ENCODE measurements at regions of chr2 and their contacts with region 1.

Region 1: DNA sequence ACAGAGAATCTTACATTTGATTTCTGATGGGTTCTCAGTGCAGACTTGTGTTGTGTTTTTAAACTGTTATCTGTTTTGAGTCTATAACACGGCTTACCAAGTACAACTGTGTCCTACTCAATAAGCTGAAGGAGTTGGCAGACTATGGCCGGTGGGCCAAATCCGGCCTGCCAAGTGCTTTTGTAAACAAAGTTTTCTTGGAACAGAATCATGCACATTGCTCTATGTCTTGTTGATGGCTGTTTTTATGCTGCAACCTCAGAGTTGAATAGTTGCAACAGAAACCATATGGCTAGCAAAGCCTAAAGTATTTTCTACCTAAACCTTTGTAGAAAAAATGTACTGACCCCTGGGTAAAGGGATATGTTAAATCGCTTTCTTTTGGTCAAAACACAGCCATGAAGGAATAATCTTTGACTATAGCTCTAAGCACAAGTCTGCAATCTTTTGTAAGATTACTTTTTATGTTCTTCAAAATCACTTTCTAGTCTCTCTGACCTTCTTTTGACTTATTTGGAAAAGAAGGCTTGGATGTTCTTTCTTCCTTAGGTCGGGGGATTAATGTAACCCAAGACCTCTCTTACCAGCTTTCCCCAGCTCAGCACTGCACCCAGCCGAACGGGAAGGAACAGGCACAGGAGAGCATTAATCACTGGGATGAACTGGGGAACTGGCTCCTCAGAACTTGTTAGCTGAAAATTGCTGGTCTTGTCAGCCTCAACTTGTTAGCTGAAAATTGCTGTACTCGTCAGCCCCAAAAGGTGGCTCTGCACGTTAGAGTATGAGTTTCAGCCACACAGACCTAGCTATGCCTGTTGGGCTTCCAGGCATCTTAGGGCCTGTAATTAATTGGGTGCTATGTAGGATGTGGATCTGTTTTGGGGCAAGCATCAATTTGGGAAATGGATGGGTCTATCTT is 75.4 kb downstream of the CD8B2 start:
- DNase-seq: no peak
- ATAC-seq: peak; percentile 75
- H3K4me3 Mint-ChIP-seq: no peak overlapping the region
- H3K27ac Mint-ChIP-seq: 0 out of 2 replicates have a peak overlapping the region, but pooled peaks have one; percentile 2
- H3K4me1 Mint-ChIP-seq: peaks cover 2% of the 10 kb centered on the region; the same call in 1 of the 2 replicates
- H3K27me3 Mint-ChIP-seq: no peaks in the 10 kb centered on the region
- CTCF ChIP-seq: no peak

Region 2: DNA sequence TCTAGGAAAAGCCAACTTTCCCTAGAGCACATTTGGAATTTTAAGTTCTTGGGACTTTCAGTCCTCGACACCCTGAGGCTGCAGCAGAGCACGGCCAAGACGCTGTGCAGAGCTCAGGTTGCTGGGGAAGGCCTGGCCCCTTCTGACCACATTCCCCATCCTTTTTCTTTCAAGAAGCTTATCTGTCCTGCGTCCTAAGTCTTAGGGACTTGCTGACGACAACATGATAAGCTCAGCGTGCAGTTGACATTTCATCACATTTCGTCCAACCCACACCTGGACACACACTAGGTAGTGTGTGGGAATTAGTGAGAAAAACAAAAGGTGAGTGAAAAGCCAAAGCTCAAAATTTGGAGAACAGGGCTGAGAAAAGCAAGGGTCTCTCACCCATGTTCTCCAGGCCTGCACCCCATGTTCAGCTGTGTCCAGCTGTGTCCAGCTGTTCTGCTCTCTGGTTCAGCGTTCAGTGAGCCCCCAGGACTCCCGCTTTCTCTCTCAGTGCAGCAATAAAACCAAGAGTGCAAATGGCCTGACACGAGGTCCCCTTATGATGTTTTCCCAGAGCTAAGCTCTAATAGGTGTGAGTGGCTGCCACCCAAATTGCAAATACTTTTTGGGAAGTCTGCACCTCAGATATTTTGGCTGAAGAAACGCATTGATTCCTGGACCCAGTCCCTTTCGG is 196.2 kb before region 1 on chr2:
- CTCF ChIA-PET with region 1: no interaction called
- POLR2A ChIA-PET with region 1: no interaction called
- DNase-seq: no peak
- ATAC-seq: no peak
- H3K4me3 Mint-ChIP-seq: no peak overlapping the region
- H3K27ac Mint-ChIP-seq: no peak overlapping the region
- H3K4me1 Mint-ChIP-seq: 0 out of 2 replicates have a peak, but pooled peaks cover 3% of the 10 kb centered on the region
- H3K27me3 Mint-ChIP-seq: no peaks in the 10 kb centered on the region
- CTCF ChIP-seq: no peak

Region 3: DNA sequence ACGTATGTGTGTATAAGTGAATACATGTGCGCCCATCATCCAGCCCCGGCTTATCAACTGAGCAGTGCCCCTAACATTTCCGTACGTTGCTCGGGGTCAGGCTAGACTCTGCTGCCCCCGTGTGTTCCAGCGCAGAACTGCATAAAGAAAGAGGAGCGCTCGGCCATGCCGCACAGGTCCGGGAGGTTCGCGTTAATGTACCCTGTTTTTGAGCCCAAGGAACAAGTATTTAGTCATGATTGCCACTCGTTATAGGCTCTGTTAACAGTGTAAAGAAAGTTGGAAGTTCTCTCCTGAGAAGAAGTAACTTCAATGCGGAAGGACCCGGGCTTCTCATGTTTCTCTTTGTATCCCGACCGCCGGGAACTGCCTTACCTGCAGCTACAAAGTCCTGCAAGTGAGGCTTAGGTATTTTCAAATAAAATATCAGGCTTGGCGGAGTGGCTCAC is 19.7 kb before region 1 on chr2:
- CTCF ChIA-PET with region 1: interaction called, 11 read pairs
- POLR2A ChIA-PET with region 1: no interaction called
- DNase-seq: peak; percentile 86
- ATAC-seq: peak; percentile 91
- H3K4me3 Mint-ChIP-seq: peak overlapping the region; percentile 67
- H3K27ac Mint-ChIP-seq: no peak overlapping the region
- H3K4me1 Mint-ChIP-seq: no peaks in the 10 kb centered on the region
- H3K27me3 Mint-ChIP-seq: no peaks in the 10 kb centered on the region
- CTCF ChIP-seq: peak; percentile 86

Region 4: DNA sequence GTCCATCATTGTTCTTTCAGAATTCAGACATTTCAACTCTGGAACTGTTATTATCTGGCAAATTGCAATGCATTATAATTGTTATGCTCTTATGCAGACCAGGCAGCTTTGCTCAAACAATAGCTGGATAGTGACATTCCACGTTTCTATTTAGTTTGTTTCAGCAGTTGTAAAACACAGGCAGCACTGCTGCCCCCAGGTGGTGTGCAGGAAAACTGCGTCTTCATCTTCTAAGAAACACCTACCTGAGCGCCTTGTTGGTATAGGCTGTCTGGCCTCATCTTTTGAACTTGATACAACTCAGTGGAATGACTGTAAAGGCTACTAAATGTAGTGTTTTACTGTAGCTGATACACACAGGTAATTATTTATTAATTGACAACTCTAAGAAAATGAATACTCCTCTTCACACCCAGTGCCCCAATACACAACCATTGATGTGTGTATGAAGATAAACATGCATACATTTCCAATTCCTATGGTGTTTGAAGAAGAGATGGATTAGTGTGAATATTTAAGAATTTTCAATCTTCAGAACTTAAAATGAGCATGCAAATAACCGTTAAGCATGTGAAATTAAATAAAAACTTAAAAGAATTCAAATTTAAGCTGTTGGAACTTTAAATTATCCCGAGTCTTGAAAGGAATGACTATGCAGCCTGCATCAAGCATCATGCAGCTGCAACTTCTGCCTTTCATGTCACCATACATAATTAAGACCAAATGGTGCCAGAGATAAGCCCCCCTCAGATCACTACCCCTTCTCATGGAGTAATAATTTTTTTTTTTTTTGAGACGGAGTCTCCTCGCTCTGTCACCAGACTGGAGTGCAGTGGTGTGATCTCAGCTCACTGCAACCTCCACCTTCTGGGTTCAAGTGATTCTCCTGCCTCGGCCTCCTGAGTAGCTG is 10.3 kb after region 1 on chr2:
- CTCF ChIA-PET with region 1: interaction called, 35 read pairs
- POLR2A ChIA-PET with region 1: no interaction called
- DNase-seq: peak; percentile 58
- ATAC-seq: peak; percentile 47; the same call in 1 of the 2 replicates
- H3K4me3 Mint-ChIP-seq: no peak overlapping the region
- H3K27ac Mint-ChIP-seq: no peak overlapping the region
- H3K4me1 Mint-ChIP-seq: peaks cover 12% of the 10 kb centered on the region
- H3K27me3 Mint-ChIP-seq: no peaks in the 10 kb centered on the region; the same call in 1 of the 2 replicates
- CTCF ChIP-seq: peak; percentile 63

Region 5: DNA sequence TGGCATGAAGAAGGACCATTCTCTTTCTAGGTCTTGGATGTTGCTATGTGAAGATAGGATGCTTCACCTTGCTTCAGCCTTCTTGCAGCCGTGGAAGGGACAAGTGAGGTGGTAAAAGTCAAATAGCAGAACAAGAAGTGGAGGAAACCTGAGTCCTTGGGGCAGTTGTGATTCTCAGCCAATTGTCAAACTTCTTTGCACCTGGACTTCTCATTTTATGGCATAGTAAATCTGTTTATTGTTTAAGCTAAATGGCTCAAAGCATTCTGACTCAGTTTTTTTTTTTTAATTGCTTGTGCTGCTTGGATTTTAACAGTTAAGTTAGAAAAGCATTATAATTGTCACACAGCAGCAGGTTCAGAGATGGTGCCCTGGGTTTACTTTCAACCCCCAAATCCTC is 356.5 kb after region 1 on chr2:
- CTCF ChIA-PET with region 1: no interaction called
- POLR2A ChIA-PET with region 1: no interaction called
- DNase-seq: no peak
- ATAC-seq: 0 out of 2 replicates have a peak, but pooled peaks have one; percentile 16
- H3K4me3 Mint-ChIP-seq: 0 out of 2 replicates have a peak overlapping the region, but pooled peaks have one; percentile 9
- H3K27ac Mint-ChIP-seq: peak overlapping the region; percentile 66; the same call in 1 of the 2 replicates
- H3K4me1 Mint-ChIP-seq: peaks cover 32% of the 10 kb centered on the region
- H3K27me3 Mint-ChIP-seq: no peaks in the 10 kb centered on the region
- CTCF ChIP-seq: no peak